ENCODE measurements at regions of chr4 and their contacts with region 1.

Region 1: GRCh38 chr4:148300877-148301276 is 141.3 kb downstream of the NR3C2 start:
- DNase-seq: no peak
- ATAC-seq: no peak
- H3K4me3 ChIP-seq: no peak overlapping the region
- H3K27ac ChIP-seq: no peak overlapping the region
- H3K4me1 ChIP-seq: no peaks in the 10 kb centered on the region
- H3K27me3 ChIP-seq: no peaks in the 10 kb centered on the region
- CTCF ChIP-seq: no peak

Region 2: DNA sequence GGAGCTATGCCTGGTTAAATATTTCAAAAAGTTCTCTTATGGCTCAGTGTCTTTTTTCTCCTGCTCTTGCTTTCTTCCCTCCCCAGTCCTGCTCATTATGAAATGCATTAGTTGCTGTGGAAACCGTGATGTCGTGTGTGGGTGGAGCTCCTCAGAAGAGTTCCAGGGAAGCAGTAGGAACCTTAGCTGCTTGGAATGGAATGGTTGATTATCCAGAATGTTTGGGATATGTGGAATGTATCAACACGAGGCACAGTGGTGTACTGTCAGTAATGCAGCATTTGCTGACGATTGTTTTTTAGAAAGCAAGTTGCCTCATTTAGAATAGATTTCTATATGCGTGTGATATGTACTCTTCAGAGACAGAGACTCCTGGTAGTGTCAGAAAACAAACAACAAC is 235.8 kb before region 1 on chr4:
- CTCF ChIA-PET with region 1: no interaction called
- POLR2A ChIA-PET with region 1: no interaction called
- in situ Hi-C with region 1: no loop called
- intact Hi-C with region 1: no loop called
- DNase-seq: no peak
- ATAC-seq: no peak
- H3K4me3 ChIP-seq: no peak overlapping the region
- H3K27ac ChIP-seq: no peak overlapping the region
- H3K4me1 ChIP-seq: no peaks in the 10 kb centered on the region
- H3K27me3 ChIP-seq: no peaks in the 10 kb centered on the region
- CTCF ChIP-seq: no peak

Region 3: DNA sequence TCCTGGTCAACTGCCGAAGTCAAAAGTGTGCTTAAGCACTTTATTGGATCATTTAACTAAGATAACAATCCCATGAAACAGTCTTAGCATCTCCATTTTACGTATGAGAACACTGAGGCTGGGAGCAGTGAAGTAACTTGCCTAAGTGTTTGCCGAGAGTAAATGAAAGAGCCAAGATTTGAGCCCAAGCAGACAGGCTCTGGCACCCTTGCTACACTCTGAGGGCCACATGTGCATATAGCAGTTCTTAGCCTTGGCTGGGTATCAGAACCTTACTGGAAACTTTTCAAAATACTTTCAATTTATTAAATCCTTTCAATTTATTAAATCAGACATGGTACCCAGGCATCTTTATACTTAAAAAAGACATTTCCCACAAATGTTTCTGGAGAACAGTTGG is 84.6 kb before region 1 on chr4:
- CTCF ChIA-PET with region 1: no interaction called
- POLR2A ChIA-PET with region 1: interaction called, 11 read pairs
- in situ Hi-C with region 1: no loop called
- intact Hi-C with region 1: no loop called
- DNase-seq: no peak
- ATAC-seq: no peak
- H3K4me3 ChIP-seq: no peak overlapping the region
- H3K27ac ChIP-seq: no peak overlapping the region
- H3K4me1 ChIP-seq: no peaks in the 10 kb centered on the region
- H3K27me3 ChIP-seq: no peaks in the 10 kb centered on the region
- CTCF ChIP-seq: no peak

Region 4: DNA sequence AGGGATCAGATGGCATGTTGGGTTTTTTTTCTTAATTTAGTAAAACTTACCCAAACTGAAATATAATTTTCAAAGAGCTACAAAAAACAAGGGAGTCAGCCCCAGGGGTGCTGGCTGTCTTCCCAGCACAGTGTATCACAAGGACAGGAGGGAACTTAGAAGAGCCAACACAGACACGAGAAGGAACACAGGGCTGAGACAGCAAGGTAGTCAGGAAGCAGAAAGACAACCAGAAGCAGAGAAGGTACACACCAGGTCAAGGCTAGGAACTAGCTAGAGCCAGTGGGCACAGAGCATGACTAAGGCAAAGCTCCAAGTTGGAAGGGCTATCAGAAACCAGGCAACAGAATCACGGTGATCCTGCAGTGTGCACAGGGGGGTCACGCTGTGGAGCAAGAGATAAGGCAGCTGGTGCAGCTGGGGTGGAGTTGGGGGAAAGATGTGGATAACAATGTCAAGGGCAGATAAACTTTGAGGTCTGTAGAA is 27.3 kb before region 1 on chr4:
- CTCF ChIA-PET with region 1: no interaction called
- POLR2A ChIA-PET with region 1: no interaction called
- in situ Hi-C with region 1: no loop called
- intact Hi-C with region 1: no loop called
- DNase-seq: no peak
- ATAC-seq: no peak
- H3K4me3 ChIP-seq: no peak overlapping the region
- H3K27ac ChIP-seq: no peak overlapping the region
- H3K4me1 ChIP-seq: no peaks in the 10 kb centered on the region
- H3K27me3 ChIP-seq: no peaks in the 10 kb centered on the region
- CTCF ChIP-seq: no peak

Measured in Panc1 (cell line).